Activated naive CD4-positive, alpha-beta T cell treated with anti-CD3 and anti-CD28 coated beads for 36 hours (primary cell): ENCODE measurements at regions of chr14 and their contacts with region 1.

Region 1: GRCh38 chr14:24366721-24367513 is 1.1 kb upstream of the NFATC4 start:
- DNase-seq: peak; percentile 31
- H3K4me3 Mint-ChIP-seq: peak overlapping the region; percentile 71
- H3K27ac Mint-ChIP-seq: no peak overlapping the region
- H3K4me1 Mint-ChIP-seq: peaks cover 29% of the 10 kb centered on the region
- H3K27me3 Mint-ChIP-seq: peaks cover 41% of the 10 kb centered on the region

Region 2: DNA sequence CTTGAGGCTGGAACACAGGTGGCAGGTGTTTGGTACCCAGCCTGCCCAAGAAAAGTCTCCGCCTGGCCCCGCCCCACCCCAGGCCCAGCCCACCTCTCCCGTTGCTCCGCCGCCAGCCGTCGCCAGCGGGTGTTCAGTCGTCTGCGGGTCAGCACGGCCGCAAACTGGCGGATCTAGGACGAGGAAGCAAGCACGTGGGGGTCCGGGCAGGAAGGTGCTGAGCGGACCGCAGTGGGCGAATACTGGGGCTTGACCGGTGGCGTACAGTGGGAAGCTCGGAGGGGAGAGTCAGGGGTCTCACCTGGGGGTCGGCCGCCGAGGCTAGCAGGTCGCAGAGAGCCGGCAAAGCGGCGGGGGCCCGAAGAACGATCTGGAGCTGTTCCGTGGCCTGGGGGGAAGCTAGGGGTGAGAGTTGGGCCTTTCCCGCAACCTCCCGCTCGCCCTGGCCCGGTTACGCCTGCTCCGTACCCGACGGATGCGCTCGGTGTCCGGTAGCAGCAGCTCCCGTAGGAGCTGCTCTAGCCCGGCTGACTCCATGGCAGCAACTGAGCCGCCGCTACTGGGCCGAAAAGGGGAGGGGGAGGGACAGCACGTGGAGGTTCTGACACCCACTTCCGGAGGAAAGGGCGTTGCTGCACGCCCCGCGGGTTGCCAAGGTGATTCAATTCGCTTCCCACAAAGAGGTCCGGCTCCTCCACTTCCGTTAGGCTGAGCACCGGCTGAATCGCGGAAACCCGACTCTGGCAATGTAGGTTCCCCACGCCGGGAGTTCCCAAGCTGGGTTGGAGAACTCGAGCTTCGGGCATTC is 178.5 kb before region 1 on chr14 and contains the start of gene IPO4:
- CTCF ChIA-PET with region 1: no interaction called
- intact Hi-C with region 1: no loop called
- DNase-seq: peak; percentile 97
- H3K4me3 Mint-ChIP-seq: peak within 1 kb of the TSS; percentile 85
- H3K27ac Mint-ChIP-seq: peak within 1 kb of the TSS; percentile 78
- H3K4me1 Mint-ChIP-seq: peaks cover 46% of the 10 kb centered on the region
- H3K27me3 Mint-ChIP-seq: no peaks in the 10 kb centered on the region
- total RNA-seq, gene IPO4: 64.2 to 74.5 TPM

Region 3: GRCh38 chr14:24339284-24340151 is 27.4 kb before region 1 on chr14 and contains the start of gene RIPK3:
- CTCF ChIA-PET with region 1: interaction called, 9 read pairs
- intact Hi-C with region 1: loop called (anchors 2 kb)
- DNase-seq: peak; percentile 84
- H3K4me3 Mint-ChIP-seq: peak within 1 kb of the TSS; percentile 89
- H3K27ac Mint-ChIP-seq: peak within 1 kb of the TSS; percentile 67
- H3K4me1 Mint-ChIP-seq: peaks cover 26% of the 10 kb centered on the region
- H3K27me3 Mint-ChIP-seq: peaks cover 11% of the 10 kb centered on the region
- total RNA-seq, gene RIPK3: 5.9 to 7.6 TPM

Region 4: DNA sequence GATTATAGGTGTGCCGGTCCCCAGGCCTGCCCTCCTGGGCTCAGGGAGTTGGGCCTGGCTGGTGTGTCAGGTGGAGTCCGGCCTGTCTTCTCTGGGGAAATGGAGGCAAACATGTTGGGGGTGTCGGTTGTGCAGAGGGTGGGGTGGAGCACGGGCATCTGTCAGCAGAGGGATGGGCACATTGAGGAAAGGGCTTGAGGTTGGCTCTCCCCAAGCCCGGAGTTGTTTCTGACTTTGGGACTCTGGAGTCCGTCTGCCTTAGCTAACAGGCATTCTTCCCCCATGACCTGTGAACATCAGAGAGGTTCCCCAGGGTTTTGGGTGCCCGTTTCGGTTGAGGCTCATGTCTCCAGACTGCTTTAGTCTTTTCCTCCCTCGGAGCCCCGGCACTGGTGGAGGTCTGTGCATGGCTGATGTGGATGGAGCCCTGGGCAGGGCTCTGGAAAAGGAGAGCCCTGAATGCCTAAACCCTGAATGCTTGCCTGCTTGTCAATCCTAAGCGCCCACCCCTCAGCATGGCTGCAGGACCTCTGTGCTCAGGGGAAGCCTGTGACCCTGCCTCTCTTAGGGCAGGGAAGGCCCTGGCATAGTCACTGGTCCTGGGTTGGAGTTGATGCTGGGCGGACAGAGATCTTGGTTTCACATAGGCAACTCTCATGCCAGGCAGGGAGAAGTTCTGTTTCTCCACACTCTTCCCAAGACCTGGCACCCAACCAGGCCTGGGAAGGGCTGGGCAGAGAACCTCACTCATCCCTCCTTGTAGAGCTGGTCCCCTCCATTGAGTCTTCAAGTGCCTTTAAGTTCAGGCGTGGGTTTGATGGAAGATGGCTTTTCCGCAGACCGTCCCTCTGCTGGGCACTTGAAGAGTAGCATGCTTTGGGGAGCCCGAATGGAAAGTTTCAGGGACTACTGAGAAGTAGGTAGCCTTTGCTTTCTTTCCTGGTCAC is 44.8 kb after region 1 on chr14:
- CTCF ChIA-PET with region 1: interaction called, 6 read pairs
- intact Hi-C with region 1: loop called (anchors 1 kb)
- DNase-seq: peak; percentile 40
- H3K4me3 Mint-ChIP-seq: no peak overlapping the region
- H3K27ac Mint-ChIP-seq: no peak overlapping the region
- H3K4me1 Mint-ChIP-seq: no peaks in the 10 kb centered on the region
- H3K27me3 Mint-ChIP-seq: no peaks in the 10 kb centered on the region

Region 5: GRCh38 chr14:24425704-24426103 is 58.8 kb after region 1 on chr14:
- CTCF ChIA-PET with region 1: interaction called, 52 read pairs
- intact Hi-C with region 1: no loop called
- DNase-seq: no peak
- H3K4me3 Mint-ChIP-seq: no peak overlapping the region
- H3K27ac Mint-ChIP-seq: no peak overlapping the region
- H3K4me1 Mint-ChIP-seq: peaks cover 36% of the 10 kb centered on the region
- H3K27me3 Mint-ChIP-seq: no peaks in the 10 kb centered on the region